Activated naive CD4-positive, alpha-beta T cell treated with anti-CD3 and anti-CD28 coated beads, Interleukin-2, amount 10 ng/mL, durations not matched to agents 7 days and 5 days (primary cell): ENCODE measurements at regions of chr11 and their contacts with region 1.

Region 1: GRCh38 chr11:12087075-12088004 is 23.1 kb upstream of the MICAL2 start:
- DNase-seq: peak; percentile 75
- H3K4me3 Mint-ChIP-seq: peak overlapping the region; percentile 56
- H3K27ac Mint-ChIP-seq: peak overlapping the region; percentile 87
- H3K4me1 Mint-ChIP-seq: peaks cover 70% of the 10 kb centered on the region
- H3K27me3 Mint-ChIP-seq: no peaks in the 10 kb centered on the region

Region 2: DNA sequence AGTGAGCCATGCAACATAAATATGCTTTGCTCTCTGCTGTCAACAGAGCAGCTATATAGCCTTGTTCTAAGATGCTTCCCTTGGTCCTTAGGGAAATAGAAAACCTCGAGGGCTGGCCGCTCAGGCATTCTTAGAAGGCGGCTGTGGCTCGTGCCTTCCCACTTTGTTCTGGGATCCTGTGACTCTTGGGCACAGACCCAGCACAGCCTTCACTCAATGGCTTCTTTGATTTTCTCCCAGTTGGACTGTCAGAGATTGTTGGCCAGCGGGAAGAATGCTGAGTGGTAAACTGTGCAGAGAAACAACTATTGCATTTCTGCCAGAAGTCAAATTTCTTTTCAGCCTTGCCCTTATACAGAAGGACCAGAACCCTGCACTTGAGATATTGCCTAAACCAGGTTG is 13.5 kb after region 1 on chr11:
- CTCF ChIA-PET with region 1: interaction called, 22 read pairs
- DNase-seq: no peak
- H3K4me3 Mint-ChIP-seq: no peak overlapping the region
- H3K27ac Mint-ChIP-seq: no peak overlapping the region
- H3K4me1 Mint-ChIP-seq: peaks cover 25% of the 10 kb centered on the region
- H3K27me3 Mint-ChIP-seq: peaks cover 60% of the 10 kb centered on the region

Region 3: DNA sequence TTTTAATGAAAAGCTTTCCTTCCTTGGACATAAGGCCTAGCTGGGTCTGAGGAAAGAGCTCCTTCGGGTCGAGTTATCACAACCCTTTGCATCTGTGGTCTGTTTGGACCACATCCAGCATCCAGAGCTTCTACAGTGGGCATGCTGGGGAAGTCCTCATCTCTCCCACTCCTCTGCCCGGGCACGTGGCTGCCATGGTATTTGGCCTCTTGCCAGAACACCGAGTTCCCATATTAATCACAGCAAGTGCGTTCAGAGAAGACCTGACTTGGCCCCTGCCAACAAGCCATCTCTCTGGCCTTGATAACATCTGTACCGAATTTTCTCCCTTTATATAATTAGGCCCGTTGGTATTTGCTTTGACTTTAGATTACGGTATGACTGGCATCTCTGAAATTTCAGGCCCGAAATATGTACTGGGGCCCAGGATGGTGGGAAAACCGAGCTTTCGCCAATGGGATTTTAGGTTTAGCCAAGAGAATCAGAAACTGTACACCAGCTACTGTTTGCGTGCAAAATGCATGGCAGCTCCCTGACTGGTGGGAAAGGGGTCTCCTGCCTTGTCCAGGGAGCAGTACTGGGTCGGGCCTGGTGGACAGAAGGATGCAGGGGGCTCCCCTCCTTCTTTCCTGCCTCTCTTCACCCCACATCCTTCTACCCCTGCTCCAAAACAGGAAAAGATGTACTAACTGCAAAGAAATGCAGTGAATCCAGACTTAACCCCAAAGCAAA is 113.1 kb after region 1 on chr11:
- CTCF ChIA-PET with region 1: interaction called, 12 read pairs
- DNase-seq: no peak
- H3K4me3 Mint-ChIP-seq: no peak overlapping the region
- H3K27ac Mint-ChIP-seq: no peak overlapping the region
- H3K4me1 Mint-ChIP-seq: peaks cover 45% of the 10 kb centered on the region
- H3K27me3 Mint-ChIP-seq: no peaks in the 10 kb centered on the region